HCT116 (cell line): ENCODE measurements at regions of chr7 and their contacts with region 1.

Region 1: DNA sequence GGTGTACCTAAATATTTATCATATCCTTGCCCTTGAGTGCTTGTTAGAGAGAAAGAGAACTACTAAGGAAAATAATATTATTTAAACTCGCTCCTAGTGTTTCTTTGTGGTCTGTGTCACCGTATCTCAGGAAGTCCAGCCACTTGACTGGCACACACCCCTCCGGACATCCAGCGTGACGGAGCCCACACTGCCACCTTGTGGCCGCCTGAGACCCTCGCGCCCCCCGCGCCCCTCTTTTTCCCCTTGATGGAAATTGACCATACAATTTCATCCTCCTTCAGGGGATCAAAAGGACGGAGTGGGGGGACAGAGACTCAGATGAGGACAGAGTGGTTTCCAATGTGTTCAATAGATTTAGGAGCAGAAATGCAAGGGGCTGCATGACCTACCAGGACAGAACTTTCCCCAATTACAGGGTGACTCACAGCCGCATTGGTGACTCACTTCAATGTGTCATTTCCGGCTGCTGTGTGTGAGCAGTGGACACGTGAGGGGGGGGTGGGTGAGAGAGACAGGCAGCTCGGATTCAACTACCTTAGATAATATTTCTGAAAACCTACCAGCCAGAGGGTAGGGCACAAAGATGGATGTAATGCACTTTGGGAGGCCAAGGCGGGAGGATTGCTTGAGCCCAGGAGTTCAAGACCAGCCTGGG is 11.4 kb downstream of the SERPINE1 start:
- DNase-seq: peak; percentile 97
- ATAC-seq: peak; percentile 88
- H3K4me3 ChIP-seq: peak overlapping the region; percentile 10 to 49; a peak in 3 of 4 replicates
- H3K27ac ChIP-seq: peak overlapping the region; percentile 83
- H3K4me1 ChIP-seq: peaks cover 27 to 71% of the 10 kb centered on the region in 2 experiments
- H3K27me3 ChIP-seq: no peaks in the 10 kb centered on the region
- CTCF ChIP-seq: peak in 2 of 3 experiments; percentile 79 to 96; a peak in 4 of 6 replicates
- POLR2A ChIP-seq: no peak
- RAD21 ChIP-seq: no peak

Region 2: GRCh38 chr7:100719523-100720319 is 418.6 kb before region 1 on chr7:
- CTCF ChIA-PET with region 1: no interaction called
- POLR2A ChIA-PET with region 1: no interaction called
- RAD21 ChIA-PET with region 1: no interaction called
- intact Hi-C with region 1: no loop called
- DNase-seq: no peak
- ATAC-seq: no peak; the same call in 1 of the 2 replicates
- H3K4me3 ChIP-seq: no peak overlapping the region
- H3K27ac ChIP-seq: no peak overlapping the region
- H3K4me1 ChIP-seq: no peaks in the 10 kb centered on the region
- H3K27me3 ChIP-seq: no peaks in the 10 kb centered on the region
- CTCF ChIP-seq: no peak
- POLR2A ChIP-seq: no peak
- RAD21 ChIP-seq: 0 out of 2 replicates have a peak, but pooled peaks have one; percentile 21

Region 3: DNA sequence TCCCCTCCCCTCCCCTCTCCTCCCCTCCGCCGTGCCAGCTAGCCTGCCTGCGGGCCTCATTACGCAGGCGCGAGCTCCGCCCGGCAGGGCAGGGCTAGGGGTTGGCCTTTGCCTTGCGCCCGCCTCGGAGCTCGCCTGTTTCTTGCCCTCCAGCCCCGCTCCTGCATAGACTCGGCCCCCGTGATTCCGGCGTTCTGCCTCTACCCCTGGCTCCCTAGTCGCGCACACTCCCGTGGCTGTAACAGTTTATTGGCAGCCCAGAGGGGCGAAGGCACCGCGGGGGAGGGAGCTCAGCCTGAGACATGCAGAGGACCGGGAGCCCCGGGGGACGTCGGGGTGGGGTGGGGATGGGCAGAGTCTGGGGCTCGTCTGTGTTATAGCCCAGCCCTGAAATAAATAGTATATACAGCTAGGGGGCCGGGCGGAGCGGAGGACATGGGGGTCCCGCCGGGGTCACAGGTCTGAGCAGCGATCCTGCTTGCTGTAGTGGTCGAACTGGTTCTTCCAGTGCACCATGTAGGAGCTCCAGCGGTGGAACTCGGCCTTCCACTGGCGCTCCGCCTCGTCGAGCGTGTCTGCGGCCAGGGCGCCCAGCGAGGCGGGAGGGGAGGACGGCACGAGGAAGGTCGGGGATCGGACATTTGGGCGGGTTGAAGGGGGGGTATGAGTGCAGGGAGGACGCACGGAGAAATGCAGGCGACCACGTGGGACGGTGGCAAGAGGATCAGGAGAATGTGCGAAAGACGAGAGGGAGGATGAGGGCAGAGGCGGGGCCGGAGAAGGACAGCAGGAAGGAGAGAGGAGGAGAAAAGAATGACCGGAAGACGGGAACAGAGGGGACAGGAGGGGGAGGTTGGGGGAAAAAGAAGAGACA is 248.3 kb before region 1 on chr7:
- CTCF ChIA-PET with region 1: no interaction called
- POLR2A ChIA-PET with region 1: interaction called, 4 read pairs
- RAD21 ChIA-PET with region 1: no interaction called
- intact Hi-C with region 1: loop called (anchors 5 kb)
- DNase-seq: peak; percentile 80
- ATAC-seq: peak; percentile 88
- H3K4me3 ChIP-seq: peak overlapping the region; percentile 63 to 83
- H3K27ac ChIP-seq: peak overlapping the region; percentile 85
- H3K4me1 ChIP-seq: peaks cover 8 to 52% of the 10 kb centered on the region in 2 experiments
- H3K27me3 ChIP-seq: no peaks in the 10 kb centered on the region
- CTCF ChIP-seq: no peak
- POLR2A ChIP-seq: peak; percentile 84
- RAD21 ChIP-seq: no peak

Region 4: GRCh38 chr7:101077303-101078089 is 60.8 kb before region 1 on chr7:
- CTCF ChIA-PET with region 1: interaction called, 11 read pairs
- POLR2A ChIA-PET with region 1: no interaction called
- RAD21 ChIA-PET with region 1: no interaction called
- intact Hi-C with region 1: no loop called
- DNase-seq: peak; percentile 68
- ATAC-seq: peak; percentile 98
- H3K4me3 ChIP-seq: no peak overlapping the region
- H3K27ac ChIP-seq: no peak overlapping the region
- H3K4me1 ChIP-seq: peaks cover 0 to 10% of the 10 kb centered on the region in 2 experiments; a peak in 2 of 4 replicates
- H3K27me3 ChIP-seq: no peaks in the 10 kb centered on the region
- CTCF ChIP-seq: peak; percentile 88 to 96 (median 95)
- POLR2A ChIP-seq: no peak
- RAD21 ChIP-seq: peak; percentile 94

Region 5: DNA sequence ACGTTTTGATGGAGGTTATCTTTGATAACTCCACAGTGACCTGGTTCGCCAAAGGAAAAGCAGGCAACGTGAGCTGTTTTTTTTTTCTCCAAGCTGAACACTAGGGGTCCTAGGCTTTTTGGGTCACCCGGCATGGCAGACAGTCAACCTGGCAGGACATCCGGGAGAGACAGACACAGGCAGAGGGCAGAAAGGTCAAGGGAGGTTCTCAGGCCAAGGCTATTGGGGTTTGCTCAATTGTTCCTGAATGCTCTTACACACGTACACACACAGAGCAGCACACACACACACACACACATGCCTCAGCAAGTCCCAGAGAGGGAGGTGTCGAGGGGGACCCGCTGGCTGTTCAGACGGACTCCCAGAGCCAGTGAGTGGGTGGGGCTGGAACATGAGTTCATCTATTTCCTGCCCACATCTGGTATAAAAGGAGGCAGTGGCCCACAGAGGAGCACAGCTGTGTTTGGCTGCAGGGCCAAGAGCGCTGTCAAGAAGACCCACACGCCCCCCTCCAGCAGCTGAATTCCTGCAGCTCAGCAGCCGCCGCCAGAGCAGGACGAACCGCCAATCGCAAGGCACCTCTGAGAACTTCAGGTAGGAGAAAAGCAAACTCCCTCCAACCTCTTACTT is 11.6 kb before region 1 on chr7 and contains the start of gene SERPINE1:
- CTCF ChIA-PET with region 1: interaction called, 16 read pairs
- POLR2A ChIA-PET with region 1: interaction called, 26 read pairs
- RAD21 ChIA-PET with region 1: no interaction called
- intact Hi-C with region 1: no loop called
- DNase-seq: peak; percentile 86
- ATAC-seq: peak; percentile 71
- H3K4me3 ChIP-seq: peak within 1 kb of the TSS; percentile 40 to 50
- H3K27ac ChIP-seq: peak within 1 kb of the TSS; percentile 57
- H3K4me1 ChIP-seq: peaks cover 50 to 68% of the 10 kb centered on the region in 2 experiments
- H3K27me3 ChIP-seq: no peaks in the 10 kb centered on the region
- CTCF ChIP-seq: peak in 2 of 3 experiments; percentile 41 to 43; a peak in 3 of 6 replicates
- POLR2A ChIP-seq: peak; percentile 71
- RAD21 ChIP-seq: no peak
- total RNA-seq, gene SERPINE1: 12.8 TPM

Region 6: GRCh38 chr7:101165075-101165957 is 27.0 kb after region 1 on chr7 and contains the start of gene VGF:
- CTCF ChIA-PET with region 1: interaction called, 16 read pairs
- POLR2A ChIA-PET with region 1: interaction called, 18 read pairs
- RAD21 ChIA-PET with region 1: no interaction called
- intact Hi-C with region 1: no loop called
- DNase-seq: peak; percentile 83
- ATAC-seq: peak; percentile 65
- H3K4me3 ChIP-seq: peak within 1 kb of the TSS; percentile 73 to 78
- H3K27ac ChIP-seq: peak within 1 kb of the TSS; percentile 97; the same call in 1 of the 2 replicates
- H3K4me1 ChIP-seq: peaks cover 59 to 97% of the 10 kb centered on the region in 2 experiments
- H3K27me3 ChIP-seq: no peaks in the 10 kb centered on the region
- CTCF ChIP-seq: no peak
- POLR2A ChIP-seq: peak; percentile 24
- RAD21 ChIP-seq: no peak
- total RNA-seq, gene VGF: 43.2 TPM

Region 7: DNA sequence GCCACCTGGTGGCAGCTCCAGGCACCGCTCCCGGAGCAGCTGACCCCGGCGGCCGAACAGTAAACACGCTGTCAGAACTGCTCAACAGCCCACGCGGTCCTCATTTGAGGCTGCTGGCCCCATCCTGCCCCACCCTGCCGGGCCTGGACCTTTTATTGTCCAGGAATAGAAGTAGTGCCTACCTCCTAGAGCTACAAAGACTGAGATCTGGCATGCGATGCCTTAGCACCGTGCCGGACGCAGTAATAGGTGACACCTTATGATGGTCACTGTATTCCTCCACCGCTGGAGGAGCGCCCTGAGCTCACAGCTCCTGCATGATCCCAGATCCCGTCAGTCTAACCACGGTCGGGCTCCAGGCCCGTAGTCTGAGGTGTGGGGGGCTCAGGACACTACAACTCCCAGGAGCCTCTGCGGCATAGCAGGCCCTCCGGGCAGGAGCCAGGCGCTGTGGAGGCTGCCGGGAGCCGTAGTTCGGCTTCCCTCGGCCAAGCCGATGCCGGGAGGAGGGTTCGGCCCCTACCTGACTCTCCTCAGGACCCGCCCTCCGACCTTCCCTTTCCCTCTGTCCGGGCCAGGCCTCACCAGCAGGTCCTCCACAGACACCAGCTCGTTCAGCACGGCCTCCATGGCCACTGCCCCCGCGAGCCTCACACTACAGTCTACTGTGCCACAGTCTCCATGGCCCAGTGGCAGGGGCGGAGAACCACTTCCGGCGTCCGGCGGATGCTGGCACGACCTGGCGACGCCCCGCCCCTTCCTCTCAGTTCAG is 106.2 kb after region 1 on chr7 and contains the start of gene FIS1:
- CTCF ChIA-PET with region 1: interaction called, 38 read pairs
- POLR2A ChIA-PET with region 1: no interaction called
- RAD21 ChIA-PET with region 1: no interaction called
- intact Hi-C with region 1: no loop called
- DNase-seq: peak; percentile 81
- ATAC-seq: peak; percentile 92
- H3K4me3 ChIP-seq: peak within 1 kb of the TSS; percentile 99 to 100
- H3K27ac ChIP-seq: peak within 1 kb of the TSS; percentile 89
- H3K4me1 ChIP-seq: peaks cover 14 to 22% of the 10 kb centered on the region in 2 experiments
- H3K27me3 ChIP-seq: no peaks in the 10 kb centered on the region
- CTCF ChIP-seq: peak in 2 of 3 experiments; percentile 84 to 87; a peak in 4 of 6 replicates
- POLR2A ChIP-seq: no peak
- RAD21 ChIP-seq: no peak
- total RNA-seq, gene FIS1: 114 TPM

Region 8: GRCh38 chr7:101442521-101442981 is 304.2 kb after region 1 on chr7:
- CTCF ChIA-PET with region 1: no interaction called
- POLR2A ChIA-PET with region 1: no interaction called
- RAD21 ChIA-PET with region 1: no interaction called
- intact Hi-C with region 1: no loop called
- DNase-seq: no peak
- ATAC-seq: no peak
- H3K4me3 ChIP-seq: no peak overlapping the region
- H3K27ac ChIP-seq: no peak overlapping the region
- H3K4me1 ChIP-seq: peaks cover 3 to 9% of the 10 kb centered on the region in 2 experiments; a peak in 3 of 4 replicates
- H3K27me3 ChIP-seq: no peaks in the 10 kb centered on the region
- CTCF ChIP-seq: no peak
- POLR2A ChIP-seq: no peak
- RAD21 ChIP-seq: no peak